ENCODE measurements at regions of chr20 and their contacts with region 1.

Region 1: DNA sequence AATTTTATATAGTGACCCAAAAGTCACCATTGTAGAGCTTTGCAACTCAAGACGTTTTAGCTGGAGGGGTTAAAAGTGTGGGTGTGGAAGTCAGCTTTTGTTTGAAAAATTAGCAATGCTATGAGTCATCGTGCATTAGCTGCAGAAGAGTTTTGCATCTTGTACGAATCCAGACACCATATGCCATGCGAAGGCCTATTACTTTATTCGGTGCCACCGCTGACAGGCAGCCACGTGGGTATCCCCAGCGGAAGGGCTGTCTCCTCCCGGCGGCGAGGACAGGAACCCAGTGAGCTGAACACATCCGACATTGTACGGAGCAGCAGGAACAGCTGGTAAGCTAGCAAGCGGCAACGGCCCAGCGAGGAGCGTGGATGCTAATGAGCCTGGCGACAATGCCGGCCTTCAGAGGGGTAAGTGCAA is 84.4 kb downstream of the INSM1 start:
- DNase-seq: peak; percentile 43
- H3K4me3 Mint-ChIP-seq: peak overlapping the region; percentile 89
- H3K27ac Mint-ChIP-seq: peak overlapping the region; percentile 91
- H3K4me1 Mint-ChIP-seq: peaks cover 54% of the 10 kb centered on the region
- H3K27me3 Mint-ChIP-seq: no peaks in the 10 kb centered on the region

Region 2: GRCh38 chr20:20267685-20268370 is 184.4 kb before region 1 on chr20:
- intact Hi-C with region 1: no loop called
- DNase-seq: no peak
- H3K4me3 Mint-ChIP-seq: no peak overlapping the region
- H3K27ac Mint-ChIP-seq: no peak overlapping the region
- H3K4me1 Mint-ChIP-seq: no peaks in the 10 kb centered on the region
- H3K27me3 Mint-ChIP-seq: peaks cover 2% of the 10 kb centered on the region

Region 3: GRCh38 chr20:20414640-20415220 is 37.5 kb before region 1 on chr20:
- intact Hi-C with region 1: loop called (anchors 5 kb)
- DNase-seq: no peak
- H3K4me3 Mint-ChIP-seq: no peak overlapping the region
- H3K27ac Mint-ChIP-seq: peak overlapping the region; percentile 4
- H3K4me1 Mint-ChIP-seq: peaks cover 32% of the 10 kb centered on the region
- H3K27me3 Mint-ChIP-seq: no peaks in the 10 kb centered on the region

Region 4: DNA sequence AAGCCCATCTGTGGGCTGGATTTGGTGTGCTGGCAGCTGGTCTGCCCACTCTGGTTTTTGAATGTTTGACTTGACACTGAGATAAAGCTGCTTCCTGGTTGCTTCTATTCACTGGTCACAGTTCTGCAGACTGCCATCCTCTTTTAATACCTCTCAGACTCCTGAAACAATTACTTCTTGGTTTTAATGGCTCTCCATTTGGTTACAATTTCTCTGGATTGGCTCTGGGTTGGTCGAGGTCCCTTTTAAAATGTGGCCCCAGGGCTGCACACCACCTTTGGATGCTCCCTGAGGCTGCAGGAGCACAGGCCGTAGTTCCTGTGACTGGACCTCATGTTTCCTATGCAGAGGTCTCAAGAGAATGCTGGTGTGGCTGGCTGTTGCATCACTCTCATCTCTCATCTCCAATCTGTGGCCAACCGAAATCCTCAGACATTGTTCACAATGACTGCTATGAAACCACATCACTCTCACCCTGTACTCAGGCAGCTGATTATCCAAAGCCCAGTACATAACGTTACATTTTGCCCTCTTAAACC is 14.1 kb after region 1 on chr20:
- intact Hi-C with region 1: loop called (anchors 2 kb)
- DNase-seq: no peak
- H3K4me3 Mint-ChIP-seq: no peak overlapping the region
- H3K27ac Mint-ChIP-seq: peak overlapping the region; percentile 83
- H3K4me1 Mint-ChIP-seq: peaks cover 31% of the 10 kb centered on the region
- H3K27me3 Mint-ChIP-seq: no peaks in the 10 kb centered on the region

Region 5: GRCh38 chr20:20480689-20481088 is 28.4 kb after region 1 on chr20:
- intact Hi-C with region 1: loop called (anchors 2 kb)
- DNase-seq: no peak
- H3K4me3 Mint-ChIP-seq: peak overlapping the region; percentile 58
- H3K27ac Mint-ChIP-seq: peak overlapping the region; percentile 78
- H3K4me1 Mint-ChIP-seq: peaks cover 44% of the 10 kb centered on the region
- H3K27me3 Mint-ChIP-seq: no peaks in the 10 kb centered on the region

Measured in activated T-helper 1 cell treated with anti-CD3 and anti-CD28 coated beads, Interleukin-12 subunit alpha, Interleukin-12 subunit beta, Interleukin-2, Interleukin-4 antibody, amounts not matched to agents 30 ng/mL and 10 ng/mL and 1 ng/mL, durations not matched to agents 14 hours and 24 hours and 36 hours (primary cell).